ENCODE measurements at regions of chrX and their contacts with region 1.

Region 1: GRCh38 chrX:38175140-38175539 is 45.5 kb downstream of the SRPX start:
- DNase-seq: no peak
- H3K4me3 ChIP-seq: no peak overlapping the region
- H3K27ac ChIP-seq: no peak overlapping the region
- H3K4me1 ChIP-seq: no peaks in the 10 kb centered on the region
- H3K27me3 ChIP-seq: no peaks in the 10 kb centered on the region
- CTCF ChIP-seq: no peak
- EP300 ChIP-seq: no peak
- POLR2A ChIP-seq: no peak

Region 2: GRCh38 chrX:37926700-37927099 is 248.4 kb before region 1 on chrX:
- intact Hi-C with region 1: loop called (anchors 10 kb)
- DNase-seq: no peak
- H3K4me3 ChIP-seq: no peak overlapping the region
- H3K27ac ChIP-seq: no peak overlapping the region
- H3K4me1 ChIP-seq: no peaks in the 10 kb centered on the region
- H3K27me3 ChIP-seq: no peaks in the 10 kb centered on the region
- CTCF ChIP-seq: peak in 2 of 4 experiments; percentile 33 to 37
- EP300 ChIP-seq: no peak
- POLR2A ChIP-seq: no peak